Gastrocnemius medialis (tissue), 4 donors: ENCODE measurements at regions of chr2 and their contacts with region 1.

Region 1: GRCh38 chr2:64311948-64312621 is 141.9 kb upstream of the LGALSL start:
- DNase-seq: peak; percentile 65 to 80
- ATAC-seq: peak; percentile 99
- H3K4me3 ChIP-seq: peak overlapping the region in 1 of 4 donors; percentile 33
- H3K27ac ChIP-seq: peak overlapping the region; percentile 36 to 47 (median 42)
- H3K4me1 ChIP-seq: peaks cover 11 to 14% of the 10 kb centered on the region in 2 donors
- H3K27me3 ChIP-seq: no peaks in the 10 kb centered on the region
- CTCF ChIP-seq: peak; percentile 26 to 55 (median 35)
- POLR2A ChIP-seq: no peak

Region 2: DNA sequence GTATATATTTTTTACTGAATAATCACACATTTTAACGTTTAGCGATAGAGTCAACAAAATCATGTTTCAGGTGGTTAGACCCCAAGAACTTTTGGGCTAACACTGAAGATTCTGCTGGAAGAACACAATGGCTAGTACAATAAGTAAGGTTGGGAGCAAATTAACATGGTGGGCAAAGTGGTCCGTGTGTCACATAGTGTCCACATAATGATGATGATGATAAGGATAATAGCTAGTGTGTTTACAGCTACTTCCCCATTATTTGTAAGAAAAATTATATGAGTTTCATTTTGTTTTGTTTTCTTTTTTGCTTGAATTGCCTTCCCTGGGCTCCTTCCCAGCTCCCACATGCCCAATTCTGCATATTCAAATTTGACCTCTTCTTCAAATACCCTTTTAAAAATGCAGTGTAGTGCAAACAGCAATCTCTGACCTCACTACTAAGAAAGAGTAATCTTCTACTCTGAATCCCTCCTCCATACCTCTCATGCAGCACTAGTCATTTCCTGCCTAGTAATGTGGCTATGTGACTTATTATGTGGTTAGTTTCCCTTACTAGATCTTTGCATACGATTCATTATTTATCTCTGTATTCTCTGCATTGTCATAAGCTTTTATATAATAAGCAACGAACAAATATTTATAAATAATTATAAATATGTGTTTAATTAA is 275.9 kb before region 1 on chr2:
- in situ Hi-C with region 1: loop called in 1 of 4 experiments (anchors 25 kb)
- intact Hi-C with region 1: no loop called
- DNase-seq: no peak
- ATAC-seq: no peak
- H3K4me3 ChIP-seq: no peak overlapping the region
- H3K27ac ChIP-seq: no peak overlapping the region
- H3K4me1 ChIP-seq: peaks cover 0 to 6% of the 10 kb centered on the region in 2 donors
- H3K27me3 ChIP-seq: no peaks in the 10 kb centered on the region
- CTCF ChIP-seq: no peak
- POLR2A ChIP-seq: no peak

Region 3: DNA sequence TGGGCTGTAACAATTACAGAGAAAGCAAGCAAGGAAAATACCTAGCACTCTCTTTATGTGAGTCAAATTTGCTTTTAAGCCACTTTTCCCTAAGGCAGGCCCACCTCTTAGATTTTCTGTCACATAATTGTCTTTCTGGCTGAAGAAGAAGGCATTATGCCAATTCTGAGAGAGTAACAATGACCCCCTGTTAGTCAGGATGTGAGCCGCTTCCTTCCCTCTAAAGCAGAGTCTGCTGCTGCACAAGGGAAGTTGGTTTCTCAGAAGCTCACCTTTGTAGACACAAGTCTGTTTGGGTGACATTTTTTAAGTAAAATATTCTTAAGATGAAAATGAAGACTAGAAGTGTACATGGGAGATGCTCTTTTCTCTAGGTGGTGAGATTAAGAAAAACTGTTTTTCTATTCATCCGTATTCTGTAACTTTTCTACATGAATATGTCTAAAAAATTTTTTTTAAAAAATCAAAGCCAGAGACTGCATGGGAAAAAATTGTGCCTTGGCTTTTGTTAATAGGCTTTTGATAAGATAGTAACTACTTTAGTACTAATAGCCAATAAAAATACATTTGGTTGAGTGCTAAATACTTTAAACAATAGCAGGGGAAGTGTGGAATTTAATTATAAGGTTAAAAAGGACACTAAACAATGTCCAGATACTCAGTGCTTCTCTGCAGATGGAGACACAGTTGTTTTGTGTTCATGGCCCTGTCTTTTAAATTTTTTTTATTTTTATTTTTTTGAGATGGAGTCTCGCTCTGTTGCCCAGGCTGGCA is 259.4 kb before region 1 on chr2:
- in situ Hi-C with region 1: loop called in 2 of 4 experiments (anchors 25 kb)
- intact Hi-C with region 1: loop called (anchors 5 kb)
- DNase-seq: no peak
- ATAC-seq: peak; percentile 65 to 80
- H3K4me3 ChIP-seq: no peak overlapping the region
- H3K27ac ChIP-seq: peak overlapping the region; percentile 62 to 71 (median 67)
- H3K4me1 ChIP-seq: peaks cover 0 to 8% of the 10 kb centered on the region in 2 donors
- H3K27me3 ChIP-seq: no peaks in the 10 kb centered on the region
- CTCF ChIP-seq: no peak
- POLR2A ChIP-seq: peak in 1 of 2 donors; percentile 14

Region 4: DNA sequence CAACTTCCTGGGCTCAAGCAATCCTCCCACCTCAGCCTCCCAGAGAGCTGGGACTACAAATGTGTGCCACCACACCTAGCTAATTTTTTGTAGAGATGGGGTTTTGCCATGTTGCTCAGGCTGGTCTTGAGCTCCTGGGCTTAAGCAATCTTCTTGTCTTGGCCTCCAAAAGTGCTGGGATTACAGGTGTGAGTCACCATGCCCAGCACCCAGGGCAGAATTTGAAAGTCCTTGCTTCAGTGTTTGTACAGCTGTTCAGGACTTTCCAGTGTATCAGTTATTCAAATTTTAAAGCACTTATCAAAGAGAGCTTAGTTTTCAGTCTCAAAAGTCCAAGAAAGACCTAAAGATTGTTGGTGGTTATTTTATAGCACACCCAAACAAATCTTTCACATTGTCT is 249.3 kb before region 1 on chr2:
- in situ Hi-C with region 1: loop called in 1 of 4 experiments (anchors 25 kb)
- intact Hi-C with region 1: no loop called
- DNase-seq: no peak
- ATAC-seq: no peak
- H3K4me3 ChIP-seq: no peak overlapping the region
- H3K27ac ChIP-seq: peak overlapping the region in 1 of 4 donors; percentile 63
- H3K4me1 ChIP-seq: no peaks in the 10 kb centered on the region
- H3K27me3 ChIP-seq: no peaks in the 10 kb centered on the region
- CTCF ChIP-seq: no peak
- POLR2A ChIP-seq: no peak

Region 5: DNA sequence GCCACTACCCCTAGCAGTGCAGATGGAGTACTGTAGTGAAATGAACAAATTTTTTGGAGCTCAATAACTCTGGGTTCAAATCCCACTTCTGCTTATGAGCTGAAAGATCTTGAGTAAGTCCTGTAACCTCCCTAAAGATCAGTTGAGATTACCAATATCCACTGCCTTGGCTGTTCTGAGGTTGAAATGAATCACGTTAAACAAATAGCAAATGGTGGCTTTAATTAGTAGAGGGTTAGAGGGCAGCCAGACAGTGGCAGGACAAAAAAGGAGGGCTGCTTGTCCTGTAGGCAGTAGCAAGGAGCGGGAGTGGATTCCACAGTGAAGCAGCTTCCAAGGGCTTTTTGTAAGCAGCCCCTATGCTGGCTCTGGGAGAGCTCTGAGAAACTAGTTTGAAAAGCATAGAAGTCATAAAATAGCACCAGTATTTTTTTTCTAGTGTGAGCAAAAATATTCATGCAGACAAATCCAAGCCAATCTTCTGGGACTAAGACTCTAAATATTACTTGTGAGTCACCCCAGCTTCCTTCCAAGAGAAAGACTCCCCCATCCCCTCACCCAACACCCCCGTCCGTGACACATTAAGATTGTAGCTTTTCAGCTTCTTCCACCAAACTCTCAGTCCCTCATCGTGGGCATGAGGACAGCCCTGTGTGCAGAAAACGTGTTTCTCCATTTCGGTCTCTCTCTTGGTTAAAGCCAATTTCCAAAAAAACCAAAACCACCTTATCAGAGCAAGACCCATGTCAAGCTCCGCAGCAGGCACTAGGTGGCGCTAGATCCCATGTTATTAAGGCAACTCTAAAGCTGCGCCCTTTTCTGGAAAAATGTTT is 18.4 kb after region 1 on chr2:
- in situ Hi-C with region 1: no loop called
- intact Hi-C with region 1: no loop called
- DNase-seq: peak; percentile 47 to 50
- ATAC-seq: peak; percentile 59 to 75
- H3K4me3 ChIP-seq: peak overlapping the region; percentile 18 to 52 (median 46)
- H3K27ac ChIP-seq: peak overlapping the region; percentile 8 to 69 (median 60)
- H3K4me1 ChIP-seq: peaks cover 27 to 42% of the 10 kb centered on the region in 2 donors
- H3K27me3 ChIP-seq: no peaks in the 10 kb centered on the region
- CTCF ChIP-seq: peak; percentile 84 to 94 (median 92)
- POLR2A ChIP-seq: no peak